ENCODE measurements at regions of chr6 and their contacts with region 1.

Region 1: DNA sequence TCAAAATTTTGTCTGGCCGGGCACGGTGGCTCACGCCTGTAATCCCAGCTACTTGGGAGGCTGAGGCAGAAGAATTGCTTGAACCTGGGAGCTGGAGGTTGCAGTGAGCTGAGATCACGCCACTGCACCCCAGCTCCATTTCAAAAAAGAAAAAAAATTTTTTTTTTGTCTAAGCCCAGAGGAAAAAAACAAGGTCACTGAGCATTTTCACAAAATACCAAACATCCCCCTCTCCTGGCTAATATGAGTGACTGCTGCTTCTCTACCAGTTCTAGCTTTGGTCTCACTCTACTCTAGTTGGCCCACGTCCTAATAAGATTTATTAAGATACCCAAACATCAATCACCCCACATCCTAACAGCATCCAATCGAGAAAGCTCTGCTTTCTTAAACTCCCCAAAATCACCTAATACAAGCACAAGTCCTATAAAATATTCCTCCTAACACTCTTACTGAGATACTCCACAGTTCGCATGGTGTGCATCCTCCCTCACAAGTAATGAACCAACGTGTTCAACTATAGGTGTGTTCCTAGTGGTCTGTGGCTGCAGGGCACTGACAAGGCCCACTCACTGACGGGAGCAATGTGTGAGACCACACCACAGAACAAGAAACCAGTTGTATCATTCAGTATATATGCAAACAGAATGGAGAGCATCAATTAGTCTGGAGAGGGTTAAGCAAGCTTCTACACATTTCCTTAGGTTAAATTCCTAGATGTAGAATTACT is 64.2 kb downstream of the FKBP5 start:
- DNase-seq: peak in 3 of 9 experiments; percentile 58 to 79 (median 64)
- ATAC-seq: peak; percentile 86
- H3K4me3 ChIP-seq: no peak overlapping the region
- H3K4me3 Mint-ChIP-seq: peak overlapping the region; percentile 30
- H3K27ac ChIP-seq: peak overlapping the region; percentile 14 to 23
- H3K27ac Mint-ChIP-seq: peak overlapping the region; percentile 91
- H3K4me1 ChIP-seq: peaks cover 47% of the 10 kb centered on the region
- H3K4me1 Mint-ChIP-seq: peaks cover 48% of the 10 kb centered on the region
- H3K27me3 ChIP-seq: no peaks in the 10 kb centered on the region
- H3K27me3 Mint-ChIP-seq: no peaks in the 10 kb centered on the region
- CTCF ChIP-seq: peak; percentile 70

Region 2: GRCh38 chr6:35569011-35569461 is 55.5 kb before region 1 on chr6:
- CTCF ChIA-PET with region 1: interaction called, 28 read pairs
- POLR2A ChIA-PET with region 1: no interaction called
- intact Hi-C with region 1: no loop called
- DNase-seq: peak in 7 of 9 experiments; percentile 5 to 62 (median 40)
- ATAC-seq: peak; percentile 48
- H3K4me3 ChIP-seq: no peak overlapping the region
- H3K4me3 Mint-ChIP-seq: no peak overlapping the region
- H3K27ac ChIP-seq: no peak overlapping the region
- H3K27ac Mint-ChIP-seq: peak overlapping the region; percentile 66
- H3K4me1 ChIP-seq: no peaks in the 10 kb centered on the region
- H3K4me1 Mint-ChIP-seq: peaks cover 8% of the 10 kb centered on the region
- H3K27me3 ChIP-seq: no peaks in the 10 kb centered on the region
- H3K27me3 Mint-ChIP-seq: peaks cover 4% of the 10 kb centered on the region
- CTCF ChIP-seq: no peak

Region 3: DNA sequence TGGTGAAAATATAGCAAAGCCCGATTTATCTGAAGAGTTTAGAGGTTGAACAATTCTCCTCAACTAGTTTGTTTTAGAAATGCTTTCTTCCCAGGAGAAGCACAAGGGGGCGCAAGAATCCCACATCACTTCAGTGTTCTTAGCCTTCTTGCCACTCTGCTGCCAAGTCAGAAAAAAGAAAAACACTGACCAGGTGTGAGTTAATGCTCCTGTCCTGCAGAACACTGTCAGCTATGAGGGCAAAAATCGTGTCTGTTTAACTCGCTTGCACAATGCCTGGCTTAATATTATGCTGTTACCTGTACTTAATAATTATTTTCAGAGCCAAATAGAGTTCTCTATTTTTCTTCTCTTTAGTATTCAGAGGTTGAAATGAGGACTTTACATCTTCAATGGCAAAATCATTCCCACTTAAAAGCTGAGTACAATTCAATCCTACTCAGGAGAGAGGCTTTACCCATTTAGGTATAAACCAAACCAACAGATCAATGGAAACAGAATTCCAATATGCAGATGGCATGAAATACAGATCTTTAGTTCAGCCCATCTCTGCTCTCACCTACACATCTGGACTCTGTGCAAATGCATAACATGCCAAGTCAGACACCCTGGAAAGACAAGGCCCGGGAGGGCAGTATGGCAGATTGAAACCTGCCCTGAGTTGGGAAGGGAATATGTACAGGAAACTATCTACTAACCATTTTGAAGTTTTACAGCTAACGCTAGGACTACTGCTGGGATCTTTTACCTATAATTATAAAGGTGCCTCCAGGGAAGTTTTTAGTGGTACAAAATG is 40.4 kb before region 1 on chr6:
- CTCF ChIA-PET with region 1: interaction called, 762 read pairs
- POLR2A ChIA-PET with region 1: interaction called, 24 read pairs
- intact Hi-C with region 1: loop called (anchors 1 kb)
- DNase-seq: peak; percentile 49 to 86 (median 78)
- ATAC-seq: peak; percentile 76
- H3K4me3 ChIP-seq: no peak overlapping the region
- H3K4me3 Mint-ChIP-seq: no peak overlapping the region
- H3K27ac ChIP-seq: no peak overlapping the region
- H3K27ac Mint-ChIP-seq: peak overlapping the region; percentile 86
- H3K4me1 ChIP-seq: peaks cover 47% of the 10 kb centered on the region
- H3K4me1 Mint-ChIP-seq: peaks cover 63% of the 10 kb centered on the region
- H3K27me3 ChIP-seq: no peaks in the 10 kb centered on the region
- H3K27me3 Mint-ChIP-seq: no peaks in the 10 kb centered on the region
- CTCF ChIP-seq: peak; percentile 88

Region 4: DNA sequence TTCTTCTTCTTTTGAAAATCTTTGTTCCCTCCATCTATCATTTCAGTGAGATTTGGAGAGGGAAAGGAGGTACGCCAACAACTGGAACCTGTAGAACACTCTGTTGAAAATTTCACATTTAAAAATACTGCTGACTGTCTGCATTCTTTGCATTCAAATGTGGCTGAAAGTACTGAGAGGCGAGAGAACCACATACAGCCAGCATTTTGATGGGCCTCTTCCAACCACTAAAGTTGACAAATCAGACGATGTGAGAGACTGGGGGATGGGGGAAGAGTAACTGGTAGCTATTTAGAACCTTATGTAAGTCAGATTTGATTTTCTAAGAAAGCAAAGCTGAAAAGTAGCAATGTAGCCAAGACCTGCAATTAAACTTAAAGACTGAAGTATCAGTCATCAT is 13.3 kb before region 1 on chr6:
- CTCF ChIA-PET with region 1: interaction called, 762 read pairs
- POLR2A ChIA-PET with region 1: interaction called, 5 read pairs
- intact Hi-C with region 1: loop called in 1 of 2 experiments (anchors 1 kb)
- DNase-seq: peak in 5 of 9 experiments; percentile 20 to 74 (median 41)
- ATAC-seq: peak; percentile 89
- H3K4me3 ChIP-seq: no peak overlapping the region
- H3K4me3 Mint-ChIP-seq: peak overlapping the region; percentile 73
- H3K27ac ChIP-seq: peak overlapping the region in 1 of 2 experiments; percentile 42
- H3K27ac Mint-ChIP-seq: peak overlapping the region; percentile 97
- H3K4me1 ChIP-seq: peaks cover 51% of the 10 kb centered on the region
- H3K4me1 Mint-ChIP-seq: peaks cover 74% of the 10 kb centered on the region
- H3K27me3 ChIP-seq: no peaks in the 10 kb centered on the region
- H3K27me3 Mint-ChIP-seq: no peaks in the 10 kb centered on the region
- CTCF ChIP-seq: no peak

Region 5: GRCh38 chr6:35663447-35664235 is 39.1 kb after region 1 on chr6:
- CTCF ChIA-PET with region 1: interaction called, 20 read pairs
- POLR2A ChIA-PET with region 1: no interaction called
- intact Hi-C with region 1: no loop called
- DNase-seq: peak in 1 of 9 experiments; percentile 46
- ATAC-seq: peak; percentile 77
- H3K4me3 ChIP-seq: no peak overlapping the region
- H3K4me3 Mint-ChIP-seq: no peak overlapping the region
- H3K27ac ChIP-seq: no peak overlapping the region
- H3K27ac Mint-ChIP-seq: no peak overlapping the region
- H3K4me1 ChIP-seq: peaks cover 57% of the 10 kb centered on the region
- H3K4me1 Mint-ChIP-seq: peaks cover 17% of the 10 kb centered on the region
- H3K27me3 ChIP-seq: no peaks in the 10 kb centered on the region
- H3K27me3 Mint-ChIP-seq: no peaks in the 10 kb centered on the region
- CTCF ChIP-seq: no peak

Region 6: DNA sequence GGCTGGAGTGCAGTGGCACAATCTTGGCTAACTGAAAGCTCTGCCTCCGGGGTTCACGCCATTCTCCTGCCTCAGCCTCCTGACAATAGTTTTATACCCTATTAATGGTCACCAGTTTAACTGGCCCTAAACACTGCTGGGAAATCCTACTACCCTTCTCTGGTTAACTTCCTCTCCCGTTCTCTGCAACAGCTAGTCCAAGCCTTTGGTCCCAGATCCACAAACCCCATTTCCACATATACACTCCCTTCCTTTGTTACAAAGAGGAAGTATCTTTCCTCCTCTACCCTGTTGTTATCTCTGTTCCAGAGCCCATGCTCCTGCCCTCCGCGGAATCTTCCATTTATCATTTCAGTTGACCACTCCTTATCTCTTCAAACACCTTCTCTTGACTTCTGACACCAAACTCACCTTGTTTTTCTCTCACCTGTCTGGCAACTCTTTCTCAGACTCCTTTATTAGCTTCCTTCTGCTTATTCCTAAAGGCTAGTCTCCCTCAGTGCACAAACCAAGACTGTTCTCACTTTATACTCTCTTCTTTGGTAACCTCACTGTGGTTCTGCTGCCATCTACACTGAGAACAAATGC is 1608.0 kb after region 1 on chr6:
- CTCF ChIA-PET with region 1: no interaction called
- POLR2A ChIA-PET with region 1: no interaction called
- intact Hi-C with region 1: no loop called
- DNase-seq: no peak
- ATAC-seq: no peak
- H3K4me3 ChIP-seq: no peak overlapping the region
- H3K4me3 Mint-ChIP-seq: no peak overlapping the region
- H3K27ac ChIP-seq: no peak overlapping the region
- H3K27ac Mint-ChIP-seq: no peak overlapping the region
- H3K4me1 ChIP-seq: no peaks in the 10 kb centered on the region
- H3K4me1 Mint-ChIP-seq: no peaks in the 10 kb centered on the region
- H3K27me3 ChIP-seq: no peaks in the 10 kb centered on the region
- H3K27me3 Mint-ChIP-seq: peaks cover 7% of the 10 kb centered on the region
- CTCF ChIP-seq: no peak